Lower leg skin (tissue), 4 donors: ENCODE measurements at regions of chr7 and their contacts with region 1.

Region 1: GRCh38 chr7:95238252-95238943 is 85.9 kb downstream of the PON1 start:
- DNase-seq: no peak
- H3K4me3 ChIP-seq: no peak overlapping the region
- CTCF ChIP-seq: no peak
- POLR2A ChIP-seq: no peak

Region 2: DNA sequence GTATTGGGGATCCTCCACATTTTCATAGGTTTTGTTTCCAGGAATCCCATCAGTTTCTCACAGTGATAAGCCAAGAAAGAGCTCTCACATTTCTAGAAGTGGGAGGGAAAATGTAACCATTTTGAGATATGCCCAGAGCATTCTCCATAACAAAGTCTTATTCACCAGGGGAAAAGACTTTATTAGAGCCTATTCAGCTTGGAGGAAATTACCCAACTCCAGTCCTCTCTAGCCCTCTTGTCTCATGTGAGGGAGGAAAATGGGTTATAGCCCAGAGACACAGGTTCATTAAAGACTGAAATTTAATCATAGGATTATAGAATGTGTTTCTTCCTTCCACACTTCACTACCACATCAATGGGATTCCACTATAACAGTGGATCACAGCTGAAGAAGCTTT is 472.3 kb after region 1 on chr7:
- intact Hi-C with region 1: no loop called
- DNase-seq: no peak
- H3K4me3 ChIP-seq: no peak overlapping the region
- CTCF ChIP-seq: no peak
- POLR2A ChIP-seq: no peak

Region 3: DNA sequence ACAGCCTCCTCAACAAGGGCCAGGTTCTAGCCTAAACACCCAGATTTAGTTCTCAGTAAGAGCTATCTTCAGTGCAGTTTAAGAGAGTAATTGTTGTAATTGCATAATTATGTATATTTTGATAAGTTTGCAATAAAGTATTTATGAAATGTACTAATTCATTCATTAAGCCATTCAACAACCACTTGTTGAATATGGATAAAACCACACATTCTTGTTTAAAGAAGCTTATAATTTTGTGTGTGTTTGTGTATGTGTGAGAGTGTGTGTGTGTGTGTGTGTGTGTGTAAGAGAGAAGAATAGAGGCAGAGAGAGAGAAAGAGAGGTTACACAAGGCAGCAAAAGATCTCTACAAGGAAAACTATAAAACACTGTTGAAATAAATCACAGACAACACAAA is 1198.5 kb after region 1 on chr7:
- intact Hi-C with region 1: loop called (anchors 5 kb)
- DNase-seq: no peak
- H3K4me3 ChIP-seq: no peak overlapping the region
- CTCF ChIP-seq: no peak
- POLR2A ChIP-seq: no peak